Activated CD8-positive, alpha-beta memory T cell treated with anti-CD3 and anti-CD28 coated beads, Interleukin-2, amount 10 ng/mL, durations not matched to agents 7 days and 5 days (primary cell): ENCODE measurements at regions of chr20 and their contacts with region 1.

Region 1: DNA sequence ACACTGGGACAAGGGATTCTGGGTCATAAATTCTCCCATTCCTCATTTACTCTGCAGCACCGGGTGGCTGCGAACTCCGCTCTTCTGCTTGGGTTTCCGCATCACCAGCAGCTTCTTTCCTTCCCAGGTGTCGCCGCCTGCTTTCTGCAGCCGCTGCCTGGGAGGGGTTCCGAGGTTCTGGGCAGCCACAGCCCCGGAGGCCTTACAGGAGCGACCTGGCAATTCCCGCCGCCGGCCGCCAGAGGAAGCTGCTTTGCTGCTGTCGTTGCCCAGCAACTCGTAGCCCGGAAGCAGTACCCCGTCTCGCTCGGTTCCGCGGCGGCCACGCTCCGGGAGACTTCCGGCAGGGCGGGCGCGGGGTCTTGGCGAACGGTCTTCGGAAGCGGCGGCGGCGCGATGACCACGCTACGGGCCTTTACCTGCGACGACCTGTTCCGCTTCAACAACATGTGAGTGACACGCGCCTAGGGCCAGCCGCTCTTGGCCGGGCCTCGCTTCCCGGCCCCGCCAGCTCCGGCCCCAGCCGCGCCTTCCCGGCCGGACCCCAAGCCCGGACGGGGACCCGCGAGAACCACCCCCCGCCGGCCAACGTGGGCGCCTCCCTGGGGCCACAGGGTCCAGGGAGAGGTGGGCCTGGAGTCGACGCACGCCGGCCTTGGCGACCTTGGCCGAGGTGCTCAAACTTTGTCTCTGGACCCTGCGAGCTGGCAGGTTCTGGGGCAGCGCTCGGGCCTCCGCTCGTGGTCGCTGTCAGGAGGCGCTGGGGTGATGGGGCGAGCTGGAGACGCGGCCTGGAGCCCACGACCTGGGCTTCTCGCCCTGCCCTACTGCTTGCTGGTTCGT is at the start of gene NAA20:
- DNase-seq: peak; percentile 95
- ATAC-seq: peak; percentile 95
- H3K4me3 Mint-ChIP-seq: peak within 1 kb of the TSS; percentile 93
- H3K27ac Mint-ChIP-seq: peak within 1 kb of the TSS; percentile 87
- H3K4me1 Mint-ChIP-seq: peaks cover 51% of the 10 kb centered on the region
- H3K27me3 Mint-ChIP-seq: peaks cover 4% of the 10 kb centered on the region
- total RNA-seq, gene NAA20: 49.1 to 64.5 TPM

Region 2: GRCh38 chr20:20027284-20027683 is 10.1 kb after region 1 on chr20:
- CTCF ChIA-PET with region 1: interaction called, 17 read pairs
- DNase-seq: no peak
- ATAC-seq: no peak
- H3K4me3 Mint-ChIP-seq: no peak overlapping the region
- H3K27ac Mint-ChIP-seq: no peak overlapping the region
- H3K4me1 Mint-ChIP-seq: peaks cover 23% of the 10 kb centered on the region
- H3K27me3 Mint-ChIP-seq: no peaks in the 10 kb centered on the region

Region 3: DNA sequence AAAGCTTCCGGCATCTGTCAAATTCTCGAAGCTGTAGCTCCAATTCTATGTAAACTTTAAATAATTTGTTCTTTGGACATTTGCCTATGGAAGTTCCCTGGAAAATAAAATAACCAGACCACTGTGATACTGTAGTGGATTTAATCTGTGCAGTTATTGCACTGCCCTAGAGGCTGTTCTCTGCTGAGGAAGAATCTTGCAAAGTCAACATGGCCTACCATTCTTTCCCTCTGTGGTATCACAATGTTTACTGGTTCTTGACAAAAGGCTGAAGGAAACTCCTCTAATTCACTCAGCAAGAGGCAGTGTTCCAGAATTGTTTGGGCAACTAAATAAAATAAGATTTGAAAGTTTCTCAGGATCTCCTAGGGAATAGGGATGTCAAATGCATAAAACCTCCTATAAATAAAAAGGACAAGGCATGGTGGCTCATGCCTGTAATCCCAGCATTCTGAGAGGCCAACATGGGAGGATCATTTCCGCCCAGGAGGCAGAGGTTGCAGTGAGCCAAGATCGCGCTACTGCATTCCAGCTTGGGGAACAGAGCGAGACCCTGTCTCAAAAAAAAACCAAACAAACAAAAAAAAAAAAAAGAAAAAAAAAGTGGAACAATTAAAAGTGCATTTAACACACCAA is 22.6 kb after region 1 on chr20:
- CTCF ChIA-PET with region 1: no interaction called
- DNase-seq: no peak
- ATAC-seq: no peak
- H3K4me3 Mint-ChIP-seq: no peak overlapping the region
- H3K27ac Mint-ChIP-seq: no peak overlapping the region
- H3K4me1 Mint-ChIP-seq: no peaks in the 10 kb centered on the region
- H3K27me3 Mint-ChIP-seq: no peaks in the 10 kb centered on the region

Region 4: GRCh38 chr20:20052074-20052970 is 35.1 kb after region 1 on chr20 and contains the starts of genes CFAP61 and CRNKL1:
- CTCF ChIA-PET with region 1: interaction called, 24 read pairs
- DNase-seq: peak; percentile 98
- ATAC-seq: peak; percentile 93
- H3K4me3 Mint-ChIP-seq: peak within 1 kb of the TSS; percentile 97
- H3K27ac Mint-ChIP-seq: peak within 1 kb of the TSS; percentile 94
- H3K4me1 Mint-ChIP-seq: peaks cover 22% of the 10 kb centered on the region
- H3K27me3 Mint-ChIP-seq: no peaks in the 10 kb centered on the region
- total RNA-seq, gene CFAP61: not detected
- total RNA-seq, gene CRNKL1: 17.8 to 25.0 TPM